CD4-positive, alpha-beta T cell (primary cell): ENCODE measurements at regions of chr10 and their contacts with region 1.

Region 1: GRCh38 chr10:69797631-69798368 is 3.9 kb upstream of the COL13A1 start:
- DNase-seq: no peak
- ATAC-seq: no peak
- H3K4me3 ChIP-seq: no peak overlapping the region
- H3K4me3 Mint-ChIP-seq: no peak overlapping the region
- H3K27ac ChIP-seq: no peak overlapping the region
- H3K27ac Mint-ChIP-seq: no peak overlapping the region
- H3K4me1 ChIP-seq: peaks cover 14% of the 10 kb centered on the region
- H3K4me1 Mint-ChIP-seq: peaks cover 10% of the 10 kb centered on the region
- H3K27me3 ChIP-seq: peaks cover 33 to 36% of the 10 kb centered on the region in 2 experiments
- H3K27me3 Mint-ChIP-seq: peaks cover 52% of the 10 kb centered on the region
- CTCF ChIP-seq: no peak

Region 2: DNA sequence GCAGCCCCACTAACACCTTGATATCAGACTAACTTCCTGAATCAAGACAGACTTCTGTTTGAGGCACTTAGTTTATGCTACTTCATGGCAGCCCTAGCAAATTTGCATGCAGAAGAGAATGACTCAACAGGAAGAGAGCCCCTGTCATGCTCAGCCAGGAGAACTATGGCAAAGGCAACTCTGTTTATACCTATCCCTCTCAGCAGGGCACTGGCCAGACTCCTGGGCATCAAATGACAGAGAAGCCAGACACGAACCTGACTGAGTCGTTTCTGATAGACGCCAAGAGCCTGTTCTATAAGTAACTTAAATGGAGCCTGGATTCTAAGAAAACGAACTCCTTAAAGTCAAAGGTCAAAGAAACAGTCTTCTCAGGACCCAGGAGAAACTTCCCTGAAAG is 1363.6 kb after region 1 on chr10:
- CTCF ChIA-PET with region 1: no interaction called
- POLR2A ChIA-PET with region 1: no interaction called
- intact Hi-C with region 1: loop called in 1 of 2 experiments (anchors 10 kb)
- DNase-seq: no peak
- ATAC-seq: no peak
- H3K4me3 ChIP-seq: no peak overlapping the region
- H3K4me3 Mint-ChIP-seq: no peak overlapping the region
- H3K27ac ChIP-seq: no peak overlapping the region
- H3K27ac Mint-ChIP-seq: no peak overlapping the region
- H3K4me1 ChIP-seq: no peaks in the 10 kb centered on the region
- H3K4me1 Mint-ChIP-seq: no peaks in the 10 kb centered on the region
- H3K27me3 ChIP-seq: peaks cover 0 to 2% of the 10 kb centered on the region in 2 experiments
- H3K27me3 Mint-ChIP-seq: no peaks in the 10 kb centered on the region
- CTCF ChIP-seq: no peak